CD4-positive, alpha-beta memory T cell (primary cell): ENCODE measurements at regions of chr13 and their contacts with region 1.

Region 1: GRCh38 chr13:45718063-45718462 is 15.9 kb downstream of the CBY2 start:
- DNase-seq: peak in 4 of 5 donors; percentile 6 to 12 (median 6)
- H3K4me3 ChIP-seq: no peak overlapping the region
- H3K4me3 Mint-ChIP-seq: no peak overlapping the region
- H3K27ac ChIP-seq: no peak overlapping the region
- H3K27ac Mint-ChIP-seq: no peak overlapping the region
- H3K4me1 ChIP-seq: no peaks in the 10 kb centered on the region
- H3K4me1 Mint-ChIP-seq: no peaks in the 10 kb centered on the region
- H3K27me3 ChIP-seq: no peaks in the 10 kb centered on the region
- H3K27me3 Mint-ChIP-seq: peaks cover 1 to 8% of the 10 kb centered on the region in 2 donors

Region 2: GRCh38 chr13:45511310-45512097 is 206.6 kb before region 1 on chr13:
- CTCF ChIA-PET with region 1: no interaction called
- POLR2A ChIA-PET with region 1: no interaction called
- intact Hi-C with region 1: loop called (anchors 2 kb)
- DNase-seq: peak in 4 of 5 donors; percentile 55 to 68 (median 62)
- H3K4me3 ChIP-seq: no peak overlapping the region
- H3K4me3 Mint-ChIP-seq: no peak overlapping the region
- H3K27ac ChIP-seq: no peak overlapping the region
- H3K27ac Mint-ChIP-seq: peak overlapping the region; percentile 6 to 89 (median 59)
- H3K4me1 ChIP-seq: peaks cover 3% of the 10 kb centered on the region
- H3K4me1 Mint-ChIP-seq: peaks cover 4 to 11% (median 9%) of the 10 kb centered on the region in 4 donors
- H3K27me3 ChIP-seq: no peaks in the 10 kb centered on the region
- H3K27me3 Mint-ChIP-seq: no peaks in the 10 kb centered on the region

Region 3: DNA sequence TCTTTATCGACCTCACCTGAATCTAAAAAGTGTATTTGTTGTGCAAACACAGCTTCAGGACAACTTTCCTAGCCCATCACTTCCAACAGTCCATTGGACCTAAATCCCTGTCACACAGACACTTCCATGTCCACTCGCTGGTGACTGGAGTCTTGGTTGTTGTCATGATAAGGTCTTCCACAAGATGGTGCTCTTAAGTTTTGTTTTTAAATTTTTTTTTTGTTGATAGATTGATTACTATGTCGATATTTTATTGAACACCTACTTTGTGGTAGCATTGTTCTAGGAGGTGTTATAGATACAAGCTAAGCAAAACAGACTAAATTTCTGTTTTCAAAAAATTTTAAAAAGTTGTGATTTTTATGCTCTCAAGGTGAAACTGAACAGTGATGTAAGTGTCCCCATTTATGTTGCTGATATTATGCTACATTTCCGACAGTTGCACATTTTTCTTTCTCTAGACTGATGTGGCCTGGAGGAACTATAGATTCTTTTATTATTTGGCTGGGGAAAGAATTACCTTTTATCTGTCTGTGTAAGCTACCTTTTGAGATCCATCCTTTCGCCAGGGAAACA is 94.5 kb before region 1 on chr13:
- CTCF ChIA-PET with region 1: interaction called, 20 read pairs
- POLR2A ChIA-PET with region 1: no interaction called
- intact Hi-C with region 1: loop called (anchors 1 kb)
- DNase-seq: peak in 4 of 5 donors; percentile 11 to 31 (median 22)
- H3K4me3 ChIP-seq: no peak overlapping the region
- H3K4me3 Mint-ChIP-seq: no peak overlapping the region
- H3K27ac ChIP-seq: no peak overlapping the region
- H3K27ac Mint-ChIP-seq: no peak overlapping the region
- H3K4me1 ChIP-seq: peaks cover 5% of the 10 kb centered on the region
- H3K4me1 Mint-ChIP-seq: peaks cover 0 to 1% (median under 1%) of the 10 kb centered on the region in 4 donors
- H3K27me3 ChIP-seq: peaks cover 6% of the 10 kb centered on the region
- H3K27me3 Mint-ChIP-seq: peaks cover 24 to 39% of the 10 kb centered on the region in 2 donors

Region 4: GRCh38 chr13:45974500-45974899 is 256.4 kb after region 1 on chr13:
- CTCF ChIA-PET with region 1: no interaction called
- POLR2A ChIA-PET with region 1: no interaction called
- intact Hi-C with region 1: no loop called
- DNase-seq: no peak
- H3K4me3 ChIP-seq: no peak overlapping the region
- H3K4me3 Mint-ChIP-seq: no peak overlapping the region
- H3K27ac ChIP-seq: no peak overlapping the region
- H3K27ac Mint-ChIP-seq: peak overlapping the region in 1 of 7 donors; percentile 18
- H3K4me1 ChIP-seq: no peaks in the 10 kb centered on the region
- H3K4me1 Mint-ChIP-seq: peaks cover 0 to 12% (median 2%) of the 10 kb centered on the region in 4 donors
- H3K27me3 ChIP-seq: no peaks in the 10 kb centered on the region
- H3K27me3 Mint-ChIP-seq: no peaks in the 10 kb centered on the region

Region 5: GRCh38 chr13:46168341-46168740 is 450.3 kb after region 1 on chr13:
- CTCF ChIA-PET with region 1: no interaction called
- POLR2A ChIA-PET with region 1: no interaction called
- intact Hi-C with region 1: no loop called
- DNase-seq: peak in 1 of 5 donors; percentile 81
- H3K4me3 ChIP-seq: peak overlapping the region; percentile 9 to 38
- H3K4me3 Mint-ChIP-seq: peak overlapping the region; percentile 62 to 92 (median 84)
- H3K27ac ChIP-seq: peak overlapping the region; percentile 74
- H3K27ac Mint-ChIP-seq: peak overlapping the region; percentile 85 to 99 (median 95)
- H3K4me1 ChIP-seq: peaks cover 99% of the 10 kb centered on the region
- H3K4me1 Mint-ChIP-seq: peaks cover 72 to 96% (median 85%) of the 10 kb centered on the region in 4 donors
- H3K27me3 ChIP-seq: no peaks in the 10 kb centered on the region
- H3K27me3 Mint-ChIP-seq: no peaks in the 10 kb centered on the region